Right ventricle myocardium superior (tissue), 1 donor: ENCODE measurements at regions of chr2 and their contacts with region 1.

Region 1: DNA sequence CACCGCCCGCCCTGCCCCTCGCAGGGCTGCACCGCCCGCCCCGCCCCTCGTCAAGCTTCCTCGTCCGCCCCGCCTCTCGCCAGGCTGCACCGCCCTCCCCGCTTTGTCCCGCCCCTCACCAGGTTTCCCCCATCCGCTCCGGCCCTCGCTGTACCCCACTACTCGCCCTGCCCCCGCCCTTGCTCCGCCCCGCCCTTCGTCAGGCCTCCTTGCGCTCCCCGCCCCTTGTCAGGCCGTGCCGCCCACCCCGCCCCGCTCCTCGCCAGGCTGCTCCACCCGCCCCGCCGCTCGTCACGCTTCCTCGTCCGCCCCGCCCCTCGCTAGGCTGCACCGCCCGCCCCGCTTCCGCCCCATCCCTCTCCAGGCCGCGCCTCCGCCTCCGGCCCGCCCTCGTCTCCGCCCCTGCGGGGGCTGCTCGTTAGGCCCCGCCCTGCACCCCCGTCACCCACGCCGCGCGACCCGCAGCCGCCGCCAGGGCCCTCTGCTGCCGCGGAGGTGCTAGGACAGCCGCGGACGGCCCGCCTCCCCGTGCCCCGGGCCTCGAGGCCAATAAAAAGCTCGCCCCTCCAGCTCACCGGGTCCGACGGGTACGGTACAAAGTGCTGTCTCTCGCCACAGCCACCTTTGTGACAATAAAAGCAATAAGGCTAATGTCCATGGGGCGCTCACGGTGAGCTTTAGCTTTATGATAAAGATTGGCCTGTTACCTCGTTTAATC is 574 bp upstream of the DNPEP start:
- DNase-seq: peak; percentile 99
- ATAC-seq: peak; percentile 90

Region 2: DNA sequence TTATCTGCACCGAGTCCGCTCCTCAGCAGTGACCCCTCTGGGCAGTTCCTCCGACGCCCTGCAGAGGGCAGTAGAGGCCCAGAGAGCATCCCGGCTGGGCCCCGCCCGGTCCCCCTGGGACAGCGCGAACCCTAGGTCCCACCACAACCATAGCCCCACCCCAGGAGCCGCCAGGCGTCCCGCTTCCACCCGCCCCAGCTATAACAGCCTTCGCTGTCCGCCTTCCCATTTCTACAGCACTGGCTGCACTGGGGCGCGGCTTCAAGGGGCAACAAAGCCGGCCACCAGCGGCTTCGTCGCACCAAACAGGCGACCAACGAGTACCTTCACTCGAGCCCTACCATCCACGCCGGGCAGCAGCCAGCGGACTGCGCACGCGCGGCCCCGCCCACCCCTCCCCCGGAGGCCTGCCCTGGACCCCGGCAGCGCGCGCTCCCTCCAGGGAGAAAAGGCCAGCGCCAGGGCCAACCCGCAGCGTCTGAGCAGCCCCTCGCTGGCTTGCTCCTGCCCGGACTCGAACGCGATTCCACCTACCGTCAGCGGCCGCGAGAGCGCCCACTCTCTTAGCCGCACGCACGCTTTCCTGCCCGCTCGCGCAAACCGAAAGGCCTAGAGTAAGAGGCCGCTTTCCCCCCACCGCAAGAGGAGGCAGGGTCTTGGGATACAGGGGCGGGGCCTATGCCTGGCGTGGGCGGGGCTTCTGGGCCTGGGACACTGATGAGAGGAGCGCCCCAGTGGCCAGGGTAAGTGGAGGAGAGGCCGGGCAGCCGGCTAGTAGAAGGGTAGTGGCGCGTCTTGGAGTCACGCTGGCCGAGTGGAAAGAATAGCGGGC is 227.9 kb before region 1 on chr2 and contains the start of gene NHEJ1:
- intact Hi-C with region 1: loop called (anchors 5 kb)
- DNase-seq: peak; percentile 99
- ATAC-seq: peak; percentile 98
- total RNA-seq, gene NHEJ1: 7.5 TPM